Testis (tissue), 5 donors: ENCODE measurements at regions of chr14 and their contacts with region 1.

Region 1: DNA sequence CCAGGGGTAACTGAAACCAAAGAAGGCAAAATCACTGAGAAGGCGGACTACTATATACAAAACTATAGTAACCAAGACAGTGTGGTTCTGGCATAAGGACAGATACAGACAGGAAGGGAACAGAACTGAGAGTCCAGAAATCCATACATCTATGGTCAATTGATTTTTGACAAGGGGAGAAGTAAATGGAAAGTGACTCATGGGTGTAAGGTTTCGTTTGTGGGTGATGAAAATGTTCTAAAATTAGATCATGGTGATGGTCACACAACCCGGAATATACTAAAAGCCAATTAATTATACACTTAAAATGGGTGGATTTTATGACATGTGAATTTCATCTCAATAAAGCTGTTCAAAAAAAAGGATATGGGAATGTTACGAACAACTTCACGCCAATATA is 18.7 kb downstream of the ANGEL1 start:
- DNase-seq: no peak
- H3K4me3 ChIP-seq: no peak overlapping the region
- H3K27ac ChIP-seq: no peak overlapping the region
- H3K4me1 ChIP-seq: no peaks in the 10 kb centered on the region
- H3K27me3 ChIP-seq: no peaks in the 10 kb centered on the region
- CTCF ChIP-seq: no peak
- POLR2A ChIP-seq: no peak

Region 2: GRCh38 chr14:76546426-76547221 is 247.3 kb before region 1 on chr14:
- intact Hi-C with region 1: loop called (anchors 10 kb)
- DNase-seq: peak; percentile 76
- H3K4me3 ChIP-seq: no peak overlapping the region
- H3K27ac ChIP-seq: no peak overlapping the region
- H3K4me1 ChIP-seq: no peaks in the 10 kb centered on the region
- H3K27me3 ChIP-seq: no peaks in the 10 kb centered on the region
- CTCF ChIP-seq: peak; percentile 19 to 73 (median 46)
- POLR2A ChIP-seq: no peak

Region 3: GRCh38 chr14:76917158-76917596 is 123.2 kb after region 1 on chr14:
- intact Hi-C with region 1: no loop called
- DNase-seq: peak; percentile 73
- H3K4me3 ChIP-seq: no peak overlapping the region
- H3K27ac ChIP-seq: peak overlapping the region in 1 of 2 donors; percentile 69
- H3K4me1 ChIP-seq: peaks cover 54% of the 10 kb centered on the region
- H3K27me3 ChIP-seq: no peaks in the 10 kb centered on the region
- CTCF ChIP-seq: peak; percentile 52 to 75 (median 69)
- POLR2A ChIP-seq: no peak